ENCODE measurements at regions of chr12 and their contacts with region 1.

Region 1: DNA sequence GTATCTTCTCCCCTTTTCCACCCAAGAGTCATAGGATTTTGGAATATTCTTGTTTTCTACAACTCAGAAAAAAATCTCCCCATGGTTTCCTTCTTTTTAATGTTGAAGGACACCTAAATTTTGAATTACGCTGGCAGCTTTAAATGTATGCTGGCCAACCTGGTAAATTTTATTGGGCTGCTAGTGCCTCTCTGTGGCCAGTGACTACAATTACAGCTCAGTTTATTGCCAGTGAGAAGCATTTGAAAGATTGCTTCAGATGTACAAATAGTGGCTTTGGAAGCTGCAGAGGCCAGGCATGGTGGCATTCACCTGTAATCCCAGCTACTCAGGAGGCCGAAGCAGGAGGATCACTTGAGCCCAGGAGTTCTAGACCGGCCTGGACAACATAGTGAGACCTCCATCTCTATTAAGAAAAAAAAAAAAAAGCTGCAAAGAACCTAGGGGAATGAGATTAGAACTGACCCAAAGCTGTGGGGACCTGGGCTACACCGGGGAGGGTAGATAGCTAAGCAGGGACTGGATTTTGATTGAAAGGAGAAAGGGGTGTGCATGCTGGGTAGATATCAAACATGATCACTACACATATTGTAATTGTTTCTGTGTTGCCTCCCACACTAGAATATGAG is 7.6 kb upstream of the RAB21 start:
- DNase-seq: no peak
- ATAC-seq: peak; percentile 93

Region 2: GRCh38 chr12:71415336-71416231 is 331.5 kb before region 1 on chr12:
- intact Hi-C with region 1: loop called (anchors 5 kb)
- DNase-seq: no peak
- ATAC-seq: peak; percentile 60

Region 3: DNA sequence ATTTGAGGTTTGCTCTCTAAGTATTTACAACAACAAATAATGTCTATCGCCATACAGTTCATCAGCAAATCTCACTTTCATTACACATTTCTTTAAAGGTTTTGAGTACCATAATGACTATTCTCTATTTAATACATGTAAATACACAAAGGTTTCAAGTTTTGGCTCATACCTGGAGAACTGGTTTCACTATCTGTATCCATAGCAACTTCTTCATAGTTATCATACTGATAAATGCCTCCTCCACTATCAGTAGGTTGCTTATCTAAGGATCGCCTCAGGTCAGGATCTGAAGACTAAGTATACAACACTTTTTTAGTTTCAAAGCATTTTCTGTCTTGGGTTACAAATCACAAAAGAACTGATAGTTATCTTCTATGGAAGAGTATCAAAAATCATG is 104.8 kb before region 1 on chr12:
- intact Hi-C with region 1: loop called (anchors 10 kb)
- DNase-seq: no peak
- ATAC-seq: no peak